Endothelial cell of umbilical vein (primary cell): ENCODE measurements at regions of chr1 and their contacts with region 1.

Region 1: DNA sequence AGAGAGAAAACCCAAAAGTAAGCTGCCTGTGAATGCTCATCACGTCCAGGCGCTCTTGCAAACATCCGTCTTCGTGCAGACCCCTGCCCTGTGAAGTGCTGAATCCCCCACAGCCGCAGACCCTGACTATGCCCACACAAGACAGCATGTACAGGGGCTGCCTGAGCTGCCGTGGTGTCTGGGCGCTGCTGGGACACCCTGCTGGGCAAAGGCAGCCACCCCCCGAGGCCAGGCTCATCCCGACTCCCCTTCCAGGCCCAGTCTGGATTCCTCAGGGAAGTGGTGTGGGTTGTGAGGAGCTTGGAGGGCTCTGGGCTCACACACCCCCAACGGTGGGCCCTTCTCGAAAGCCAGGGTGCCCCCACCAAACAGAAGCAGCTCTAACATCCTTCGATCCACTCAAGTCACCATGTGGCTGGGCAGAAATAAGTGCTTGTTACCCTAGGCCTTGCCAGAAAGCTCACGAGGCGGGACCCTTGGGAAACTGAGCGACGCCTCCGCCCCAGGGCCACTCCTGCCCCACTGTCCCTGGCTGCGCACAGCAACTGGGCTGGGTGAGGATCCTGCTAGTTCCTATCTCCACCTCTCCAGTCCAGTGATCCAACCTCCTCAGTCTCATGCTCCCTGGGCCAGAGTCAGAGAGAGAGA is 4.8 kb upstream of the WNT9A start:
- DNase-seq: no peak
- H3K4me3 ChIP-seq: no peak overlapping the region
- H3K27ac ChIP-seq: no peak overlapping the region
- H3K4me1 ChIP-seq: peaks cover 3% of the 10 kb centered on the region
- H3K27me3 ChIP-seq: peaks cover 5 to 17% of the 10 kb centered on the region in 2 experiments
- CTCF ChIP-seq: no peak
- POLR2A ChIP-seq: no peak

Region 2: DNA sequence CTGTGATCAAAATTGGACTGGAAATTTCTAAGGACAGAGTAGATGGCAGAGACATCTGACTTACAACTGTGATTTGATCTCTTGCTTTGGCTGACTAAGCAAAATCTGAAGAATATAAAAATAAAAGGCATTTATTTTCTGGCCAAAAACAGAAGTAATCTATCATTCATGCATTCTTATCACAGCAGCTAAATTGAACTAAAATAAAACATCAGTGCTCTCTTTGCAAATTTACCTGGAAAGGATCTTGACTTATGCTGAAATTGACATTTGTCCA is 470.5 kb before region 1 on chr1:
- CTCF ChIA-PET with region 1: interaction called, 29 read pairs
- POLR2A ChIA-PET with region 1: no interaction called
- dilution Hi-C with region 1: no loop called
- intact Hi-C with region 1: loop called (anchors 1 kb)
- DNase-seq: no peak
- H3K4me3 ChIP-seq: no peak overlapping the region
- H3K27ac ChIP-seq: no peak overlapping the region
- H3K4me1 ChIP-seq: no peaks in the 10 kb centered on the region
- H3K27me3 ChIP-seq: peaks cover 2 to 28% of the 10 kb centered on the region in 2 experiments
- CTCF ChIP-seq: no peak
- POLR2A ChIP-seq: no peak

Region 3: DNA sequence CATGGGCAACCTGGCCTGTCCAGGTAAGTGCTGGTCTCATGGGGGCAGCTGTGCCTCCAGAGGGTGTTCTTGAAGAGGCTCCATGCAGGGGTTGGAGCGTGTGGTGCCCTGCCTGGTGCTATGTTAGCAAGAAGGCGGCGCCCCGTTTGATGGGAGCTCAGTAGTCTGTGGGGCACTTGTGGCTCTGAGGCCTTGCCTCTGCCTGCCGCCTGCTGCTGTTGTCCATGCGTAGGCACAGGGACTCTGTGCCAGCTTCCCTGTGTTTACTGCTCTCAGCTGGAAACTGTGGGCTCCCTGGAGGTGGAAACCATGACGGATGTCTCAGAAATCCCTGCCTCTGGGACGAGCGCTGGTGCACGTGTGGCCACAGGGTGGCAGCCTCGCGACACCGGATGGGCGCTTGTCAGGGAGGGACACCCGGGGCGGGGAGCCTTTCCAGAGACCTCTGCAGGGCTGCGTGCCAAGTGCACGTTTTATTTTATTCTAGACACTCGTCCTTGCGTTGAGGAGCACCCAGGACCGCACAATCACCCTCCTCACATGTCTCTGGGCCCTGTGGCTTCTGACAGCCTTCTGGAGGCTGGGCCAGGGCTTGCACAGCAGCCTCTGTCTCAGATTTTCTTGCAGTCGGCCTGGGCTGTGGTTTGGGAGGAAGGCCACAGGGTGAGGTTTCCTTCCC is 190.1 kb before region 1 on chr1:
- CTCF ChIA-PET with region 1: interaction called, 18 read pairs
- POLR2A ChIA-PET with region 1: no interaction called
- dilution Hi-C with region 1: no loop called
- intact Hi-C with region 1: loop called (anchors 1 kb)
- DNase-seq: peak; percentile 76
- H3K4me3 ChIP-seq: no peak overlapping the region
- H3K27ac ChIP-seq: no peak overlapping the region
- H3K4me1 ChIP-seq: peaks cover 8% of the 10 kb centered on the region
- H3K27me3 ChIP-seq: no peaks in the 10 kb centered on the region
- CTCF ChIP-seq: peak; percentile 77 to 89
- POLR2A ChIP-seq: no peak

Region 4: GRCh38 chr1:228174482-228175375 is 222.2 kb after region 1 on chr1:
- CTCF ChIA-PET with region 1: no interaction called
- POLR2A ChIA-PET with region 1: no interaction called
- dilution Hi-C with region 1: no loop called
- intact Hi-C with region 1: no loop called
- DNase-seq: no peak
- H3K4me3 ChIP-seq: no peak overlapping the region
- H3K27ac ChIP-seq: no peak overlapping the region
- H3K4me1 ChIP-seq: no peaks in the 10 kb centered on the region
- H3K27me3 ChIP-seq: no peaks in the 10 kb centered on the region
- CTCF ChIP-seq: no peak
- POLR2A ChIP-seq: no peak